ENCODE measurements at regions of chr17 and their contacts with region 1.

Region 1: DNA sequence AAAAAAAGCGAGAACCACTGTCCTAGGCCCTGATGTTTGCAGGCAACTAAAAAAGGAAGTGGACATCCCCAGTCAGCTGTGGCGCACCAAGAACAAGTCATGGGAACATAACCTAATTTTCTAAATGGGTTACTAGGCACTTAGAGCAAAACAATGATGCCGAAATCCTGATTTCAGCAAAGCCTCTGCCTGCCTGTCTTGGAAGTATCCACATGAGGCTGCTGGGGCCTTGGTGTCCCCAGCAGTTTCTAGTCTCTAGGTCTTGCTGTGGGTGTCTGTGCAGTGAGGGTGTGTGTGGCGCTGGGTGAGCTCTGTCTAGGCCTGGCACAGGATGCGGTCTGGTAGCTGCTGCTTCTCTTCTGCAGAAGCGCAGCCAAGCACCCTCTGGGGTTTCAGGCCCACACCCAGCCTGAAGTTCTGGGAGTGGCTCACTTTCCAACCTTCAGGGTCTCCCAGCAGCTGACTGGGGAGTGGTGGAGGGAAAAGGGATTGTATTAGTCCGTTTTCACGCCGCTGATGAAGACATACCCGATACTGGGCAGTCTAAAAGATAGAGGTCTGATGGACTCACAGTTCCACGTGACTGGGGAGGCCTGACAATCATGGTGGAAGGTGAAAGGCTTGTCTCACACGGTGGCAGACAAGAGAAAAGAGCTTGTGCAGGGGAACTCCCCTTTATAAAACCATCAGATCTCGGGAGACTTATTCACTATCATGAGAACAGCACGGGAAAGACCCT is 21.1 kb downstream of the STH start:
- DNase-seq: peak; percentile 81
- H3K4me3 Mint-ChIP-seq: peak overlapping the region; percentile 1
- H3K27ac Mint-ChIP-seq: peak overlapping the region; percentile 89
- H3K4me1 Mint-ChIP-seq: peaks cover 33% of the 10 kb centered on the region
- H3K27me3 Mint-ChIP-seq: no peaks in the 10 kb centered on the region

Region 2: GRCh38 chr17:45894022-45894784 is 126.0 kb before region 1 on chr17 and contains the start of gene MAPT:
- CTCF ChIA-PET with region 1: no interaction called
- POLR2A ChIA-PET with region 1: no interaction called
- DNase-seq: peak; percentile 81
- H3K4me3 Mint-ChIP-seq: peak within 1 kb of the TSS; percentile 74
- H3K27ac Mint-ChIP-seq: no peak within 1 kb of the TSS
- H3K4me1 Mint-ChIP-seq: peaks cover 14% of the 10 kb centered on the region
- H3K27me3 Mint-ChIP-seq: peaks cover 68% of the 10 kb centered on the region
- total RNA-seq, gene MAPT: 0.15 to 0.70 TPM

Region 3: GRCh38 chr17:46002311-46002972 is 17.8 kb before region 1 on chr17:
- CTCF ChIA-PET with region 1: interaction called, 15 read pairs
- POLR2A ChIA-PET with region 1: interaction called, 6 read pairs
- DNase-seq: peak; percentile 80
- H3K4me3 Mint-ChIP-seq: no peak overlapping the region
- H3K27ac Mint-ChIP-seq: no peak overlapping the region
- H3K4me1 Mint-ChIP-seq: peaks cover 2% of the 10 kb centered on the region
- H3K27me3 Mint-ChIP-seq: peaks cover 5% of the 10 kb centered on the region

Region 4: DNA sequence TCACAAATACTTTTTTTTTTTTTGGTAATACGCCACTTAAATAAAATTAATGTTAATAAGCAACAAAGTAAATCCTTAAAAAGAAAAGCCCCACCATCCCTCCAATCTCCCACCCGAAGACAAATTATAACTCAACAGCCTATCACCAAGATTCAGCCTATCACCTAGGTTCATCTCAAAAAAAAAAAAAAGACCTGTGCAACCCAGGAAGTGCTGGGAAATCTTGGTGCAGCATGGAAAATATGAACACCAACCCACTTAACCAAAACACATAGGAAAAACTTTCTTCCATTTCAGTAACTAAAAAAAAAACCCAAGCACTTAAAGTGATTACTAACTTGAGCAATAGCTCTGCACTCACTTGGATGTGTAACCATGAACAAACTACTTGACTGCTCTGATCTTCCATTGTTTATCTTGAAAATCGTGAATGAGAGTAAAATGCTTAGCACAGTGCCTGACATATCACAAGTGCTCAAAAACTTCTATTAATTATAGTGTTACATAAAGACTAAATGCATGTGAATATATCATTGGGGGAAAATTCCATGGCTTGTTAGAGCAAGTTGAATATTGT is 69.3 kb after region 1 on chr17:
- CTCF ChIA-PET with region 1: no interaction called
- POLR2A ChIA-PET with region 1: no interaction called
- DNase-seq: no peak
- H3K4me3 Mint-ChIP-seq: no peak overlapping the region
- H3K27ac Mint-ChIP-seq: no peak overlapping the region
- H3K4me1 Mint-ChIP-seq: peaks cover 7% of the 10 kb centered on the region
- H3K27me3 Mint-ChIP-seq: no peaks in the 10 kb centered on the region

Measured in activated CD4-positive, alpha-beta memory T cell treated with anti-CD3 and anti-CD28 coated beads, Interleukin-2, amount 10 ng/mL, durations not matched to agents 7 days and 5 days (primary cell).